Activated B cell treated with CpG ODN at 0.5 μM for 24 hours (primary cell): ENCODE measurements at regions of chr14 and their contacts with region 1.

Region 1: GRCh38 chr14:92748259-92749016 is at the start of gene LGMN:
- DNase-seq: peak; percentile 75
- ATAC-seq: peak; percentile 97
- H3K4me3 Mint-ChIP-seq: peak within 1 kb of the TSS; percentile 90
- H3K27ac Mint-ChIP-seq: peak within 1 kb of the TSS; percentile 82
- H3K4me1 Mint-ChIP-seq: peaks cover 77% of the 10 kb centered on the region
- H3K27me3 Mint-ChIP-seq: no peaks in the 10 kb centered on the region
- CTCF ChIP-seq: no peak
- total RNA-seq, gene LGMN: 10.3 and 11.8 TPM in 2 replicates

Region 2: GRCh38 chr14:92704036-92704804 is 44.2 kb before region 1 on chr14:
- CTCF ChIA-PET with region 1: no interaction called
- POLR2A ChIA-PET with region 1: interaction called, 7 read pairs
- intact Hi-C with region 1: loop called (anchors 1 kb)
- DNase-seq: peak; percentile 57
- ATAC-seq: peak; percentile 98
- H3K4me3 Mint-ChIP-seq: peak overlapping the region; percentile 51
- H3K27ac Mint-ChIP-seq: peak overlapping the region; percentile 90
- H3K4me1 Mint-ChIP-seq: peaks cover 60% of the 10 kb centered on the region
- H3K27me3 Mint-ChIP-seq: no peaks in the 10 kb centered on the region
- CTCF ChIP-seq: no peak

Region 3: DNA sequence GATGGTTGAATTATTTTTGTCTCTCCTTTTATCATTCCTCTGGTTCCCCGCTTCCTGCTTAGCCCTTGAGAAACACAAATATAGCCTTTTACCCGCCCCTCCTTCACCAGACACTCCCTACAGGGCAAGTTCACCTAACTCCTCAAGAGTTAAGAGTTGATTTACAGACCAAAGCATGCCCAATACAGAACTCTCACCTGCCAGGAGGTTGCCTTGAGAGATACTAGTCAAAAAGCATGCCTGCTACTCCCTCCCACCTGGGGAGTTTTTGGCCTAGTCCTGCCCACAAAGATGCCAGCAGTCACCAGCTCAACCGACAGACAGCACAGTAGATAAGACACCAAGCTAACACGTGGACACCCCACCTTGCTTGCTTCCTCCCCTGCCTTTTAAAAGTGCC is 11.2 kb before region 1 on chr14:
- CTCF ChIA-PET with region 1: no interaction called
- POLR2A ChIA-PET with region 1: interaction called, 5 read pairs
- intact Hi-C with region 1: loop called (anchors 2 kb)
- DNase-seq: no peak
- ATAC-seq: no peak
- H3K4me3 Mint-ChIP-seq: no peak overlapping the region
- H3K27ac Mint-ChIP-seq: peak overlapping the region; percentile 46
- H3K4me1 Mint-ChIP-seq: peaks cover 20% of the 10 kb centered on the region
- H3K27me3 Mint-ChIP-seq: no peaks in the 10 kb centered on the region
- CTCF ChIP-seq: no peak

Region 4: GRCh38 chr14:92759300-92759678 is 10.9 kb after region 1 on chr14:
- CTCF ChIA-PET with region 1: no interaction called
- POLR2A ChIA-PET with region 1: interaction called, 11 read pairs
- intact Hi-C with region 1: no loop called
- DNase-seq: no peak
- ATAC-seq: no peak
- H3K4me3 Mint-ChIP-seq: no peak overlapping the region
- H3K27ac Mint-ChIP-seq: no peak overlapping the region
- H3K4me1 Mint-ChIP-seq: peaks cover 16% of the 10 kb centered on the region
- H3K27me3 Mint-ChIP-seq: no peaks in the 10 kb centered on the region
- CTCF ChIP-seq: no peak

Region 5: DNA sequence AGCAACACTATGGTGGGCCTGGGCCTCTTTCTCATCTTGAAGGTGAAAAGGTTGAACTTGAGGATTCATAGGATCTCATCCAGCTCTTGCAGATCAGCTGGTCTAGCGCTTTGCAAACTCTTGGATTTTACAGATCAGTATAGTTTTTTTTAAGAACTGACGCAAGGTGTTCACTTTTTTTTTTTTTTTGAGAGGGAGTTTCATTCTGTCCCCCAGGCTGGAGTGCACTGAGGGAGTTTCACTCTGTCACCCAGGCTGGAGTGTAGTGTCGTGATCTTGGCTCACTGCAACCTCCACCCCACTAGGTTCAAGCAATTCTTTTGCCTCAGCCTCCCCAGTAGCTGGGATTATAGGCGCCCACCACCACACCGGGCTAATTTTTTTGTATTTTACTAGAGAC is 20.4 kb after region 1 on chr14:
- CTCF ChIA-PET with region 1: interaction called, 4 read pairs
- POLR2A ChIA-PET with region 1: interaction called, 11 read pairs
- intact Hi-C with region 1: loop called (anchors 1 kb)
- DNase-seq: no peak
- ATAC-seq: no peak
- H3K4me3 Mint-ChIP-seq: peak overlapping the region; percentile 55
- H3K27ac Mint-ChIP-seq: peak overlapping the region; percentile 84
- H3K4me1 Mint-ChIP-seq: peaks cover 50% of the 10 kb centered on the region
- H3K27me3 Mint-ChIP-seq: no peaks in the 10 kb centered on the region
- CTCF ChIP-seq: no peak

Region 6: GRCh38 chr14:92783816-92784431 is 35.5 kb after region 1 on chr14:
- CTCF ChIA-PET with region 1: interaction called, 4 read pairs
- POLR2A ChIA-PET with region 1: interaction called, 5 read pairs
- intact Hi-C with region 1: loop called (anchors 2 kb)
- DNase-seq: no peak
- ATAC-seq: peak; percentile 85
- H3K4me3 Mint-ChIP-seq: no peak overlapping the region
- H3K27ac Mint-ChIP-seq: no peak overlapping the region
- H3K4me1 Mint-ChIP-seq: peaks cover 13% of the 10 kb centered on the region
- H3K27me3 Mint-ChIP-seq: no peaks in the 10 kb centered on the region
- CTCF ChIP-seq: peak; percentile 34